Activated B cell treated with CpG ODN at 0.5 μM for 24 hours (primary cell): ENCODE measurements at regions of chr22 and their contacts with region 1.

Region 1: DNA sequence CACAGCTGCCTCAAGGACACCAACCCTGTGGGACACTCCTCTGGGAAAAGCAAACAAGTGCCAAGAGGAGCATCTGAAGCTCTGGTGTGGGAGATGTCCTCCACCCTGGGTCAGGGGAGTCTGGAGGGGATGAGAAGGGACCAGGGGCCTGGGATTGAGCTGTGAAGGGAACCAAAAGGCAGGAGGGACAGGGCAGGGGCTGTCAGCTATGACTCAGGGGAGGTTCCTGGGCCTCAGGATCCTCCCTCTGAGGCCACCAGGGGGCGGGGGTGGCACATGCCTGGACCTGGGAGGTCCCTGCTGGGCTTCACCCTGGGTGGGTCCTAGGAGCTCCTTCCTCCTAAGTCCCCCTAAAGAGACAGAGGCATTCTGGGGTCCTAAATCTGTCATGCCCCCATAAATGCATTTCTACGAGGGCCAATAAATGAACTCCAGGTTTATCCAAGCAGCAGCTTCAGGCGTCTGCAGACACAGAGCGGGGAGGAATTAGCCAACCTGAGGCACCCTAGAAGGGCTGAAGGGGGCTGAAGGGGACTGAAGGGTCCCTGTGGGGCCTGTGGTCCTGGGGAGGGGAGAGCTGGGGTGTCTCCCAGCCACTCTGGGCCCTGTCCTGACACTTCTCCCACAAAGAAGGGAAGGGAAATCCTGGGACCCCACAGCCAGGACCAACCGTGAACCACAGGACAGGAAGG is 31.9 kb upstream of the IGLL5 start:
- DNase-seq: peak; percentile 53
- ATAC-seq: peak; percentile 79
- H3K4me3 Mint-ChIP-seq: no peak overlapping the region
- H3K27ac Mint-ChIP-seq: peak overlapping the region; percentile 4
- H3K4me1 Mint-ChIP-seq: peaks cover 35% of the 10 kb centered on the region
- H3K27me3 Mint-ChIP-seq: peaks cover 10% of the 10 kb centered on the region
- CTCF ChIP-seq: no peak

Region 2: GRCh38 chr22:22546490-22546889 is 309.3 kb before region 1 on chr22:
- CTCF ChIA-PET with region 1: no interaction called
- POLR2A ChIA-PET with region 1: no interaction called
- intact Hi-C with region 1: no loop called
- DNase-seq: no peak
- ATAC-seq: no peak
- H3K4me3 Mint-ChIP-seq: no peak overlapping the region
- H3K27ac Mint-ChIP-seq: no peak overlapping the region
- H3K4me1 Mint-ChIP-seq: peaks cover 10% of the 10 kb centered on the region
- H3K27me3 Mint-ChIP-seq: no peaks in the 10 kb centered on the region
- CTCF ChIP-seq: no peak

Region 3: GRCh38 chr22:22787786-22788459 is 67.8 kb before region 1 on chr22:
- CTCF ChIA-PET with region 1: no interaction called
- POLR2A ChIA-PET with region 1: no interaction called
- intact Hi-C with region 1: no loop called
- DNase-seq: peak; percentile 52
- ATAC-seq: peak; percentile 83
- H3K4me3 Mint-ChIP-seq: no peak overlapping the region
- H3K27ac Mint-ChIP-seq: no peak overlapping the region
- H3K4me1 Mint-ChIP-seq: no peaks in the 10 kb centered on the region
- H3K27me3 Mint-ChIP-seq: peaks cover 4% of the 10 kb centered on the region
- CTCF ChIP-seq: no peak

Region 4: DNA sequence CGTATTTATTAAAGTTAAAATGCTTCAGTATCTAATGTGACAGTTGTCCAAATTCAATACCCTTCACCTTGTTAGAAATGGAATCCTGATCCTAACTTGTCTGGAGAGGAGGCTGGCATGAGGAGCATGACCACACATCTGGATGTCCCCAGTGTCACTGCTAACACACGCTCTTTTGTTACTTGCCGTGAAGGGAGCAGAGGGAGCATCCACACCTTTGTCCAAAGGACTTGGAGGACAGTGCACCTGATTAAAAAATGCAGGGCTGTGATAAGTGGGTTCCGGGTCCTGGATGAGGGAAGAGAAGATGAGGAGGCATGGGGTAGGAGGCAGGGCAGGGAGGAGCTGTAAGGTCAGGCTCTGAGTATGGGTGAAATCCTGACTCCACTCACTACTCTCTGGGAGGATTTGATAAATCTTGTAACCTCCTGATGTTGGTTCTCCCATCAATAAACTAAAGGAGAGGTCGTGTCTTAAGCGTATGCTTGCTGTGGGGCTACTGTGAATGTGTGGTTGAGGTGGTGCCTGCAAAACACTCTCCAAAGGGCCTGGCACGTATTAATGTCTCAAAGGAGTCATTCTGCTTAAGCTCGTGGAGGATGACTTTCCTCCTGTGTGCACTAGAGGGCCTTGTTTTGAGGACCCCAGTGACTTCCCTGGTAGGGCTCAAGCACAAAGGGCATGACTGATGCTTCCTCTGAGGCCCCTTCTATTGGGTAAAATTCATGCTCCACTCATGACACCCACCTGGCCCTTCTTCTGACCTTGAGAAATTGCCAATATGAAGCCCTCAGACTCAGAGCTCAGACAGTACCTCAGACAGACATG is 15.0 kb after region 1 on chr22:
- CTCF ChIA-PET with region 1: interaction called, 12 read pairs
- POLR2A ChIA-PET with region 1: interaction called, 8 read pairs
- intact Hi-C with region 1: no loop called
- DNase-seq: no peak
- ATAC-seq: peak; percentile 43
- H3K4me3 Mint-ChIP-seq: peak overlapping the region; percentile 15
- H3K27ac Mint-ChIP-seq: peak overlapping the region; percentile 30
- H3K4me1 Mint-ChIP-seq: peaks cover 39% of the 10 kb centered on the region
- H3K27me3 Mint-ChIP-seq: peaks cover 2% of the 10 kb centered on the region
- CTCF ChIP-seq: no peak

Region 5: GRCh38 chr22:22877523-22878210 is 21.9 kb after region 1 on chr22:
- CTCF ChIA-PET with region 1: interaction called, 90 read pairs
- POLR2A ChIA-PET with region 1: interaction called, 68 read pairs
- intact Hi-C with region 1: no loop called
- DNase-seq: no peak
- ATAC-seq: no peak
- H3K4me3 Mint-ChIP-seq: no peak overlapping the region
- H3K27ac Mint-ChIP-seq: no peak overlapping the region
- H3K4me1 Mint-ChIP-seq: peaks cover 56% of the 10 kb centered on the region
- H3K27me3 Mint-ChIP-seq: no peaks in the 10 kb centered on the region
- CTCF ChIP-seq: no peak